ENCODE measurements at regions of chr17 and their contacts with region 1.

Region 1: DNA sequence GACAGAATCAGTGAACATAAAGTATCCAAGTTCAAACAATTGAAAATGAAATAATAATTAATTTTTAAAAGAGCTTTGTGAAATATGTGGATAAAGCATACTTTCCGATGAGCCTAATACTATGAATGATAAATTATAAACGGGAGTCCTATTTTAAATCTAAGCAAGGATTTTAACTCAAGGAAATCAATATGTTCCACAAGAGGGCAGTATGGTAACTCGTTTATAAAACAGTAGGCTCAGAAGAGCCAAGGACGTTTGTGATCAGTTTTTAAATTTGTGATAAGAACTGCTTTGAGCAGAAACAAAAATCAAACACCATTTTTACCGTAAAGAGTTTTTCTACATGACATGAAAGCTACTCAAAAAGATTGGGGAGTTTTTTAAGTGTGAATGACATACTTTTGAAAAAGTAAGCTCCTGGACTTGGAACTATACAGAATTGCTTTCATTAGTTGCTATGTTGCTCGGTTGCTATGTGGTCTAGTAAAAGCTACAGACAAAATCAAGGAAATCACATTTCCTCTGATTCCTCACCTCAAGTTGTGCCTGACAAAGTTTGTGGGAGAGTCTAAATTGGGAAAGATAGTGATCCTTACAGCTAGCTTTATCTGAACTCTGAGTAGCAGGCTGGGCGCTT is 11.8 kb upstream of the TEKT1 start:
- DNase-seq: no peak
- H3K4me3 ChIP-seq: no peak overlapping the region
- CTCF ChIP-seq: peak; percentile 26

Region 2: DNA sequence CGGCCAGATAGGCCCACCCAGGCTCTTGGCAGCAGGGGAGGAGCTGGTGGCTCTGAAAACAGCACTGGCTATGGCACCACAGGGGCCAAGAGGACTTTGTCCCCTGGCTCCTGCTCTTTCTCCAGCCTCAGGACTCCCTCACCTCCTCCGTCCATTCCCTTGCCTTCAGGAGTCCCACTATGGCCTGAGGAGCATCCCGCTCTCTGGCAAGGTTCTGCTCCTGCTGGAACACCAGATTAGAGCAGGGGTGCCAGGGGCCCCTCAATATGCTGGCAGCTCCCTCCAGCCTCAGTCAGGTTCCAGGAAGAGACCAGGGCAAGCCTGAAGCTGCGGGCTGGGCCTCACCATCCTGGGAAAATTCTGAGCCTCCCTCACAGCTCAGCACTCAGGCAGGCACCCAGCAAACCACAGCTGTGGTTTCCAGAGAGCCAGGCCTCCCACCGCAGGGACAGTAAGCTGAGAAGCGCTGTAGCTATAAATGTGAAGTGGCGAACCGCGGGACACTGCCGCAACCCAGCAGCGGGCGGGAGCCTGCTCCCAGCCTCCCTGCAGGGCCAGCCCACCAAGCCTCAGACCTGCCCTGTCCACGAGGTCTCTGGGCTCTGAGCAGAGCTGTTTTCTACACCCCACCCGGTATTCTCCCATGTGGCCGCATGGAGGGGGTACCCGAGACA is 166.1 kb before region 1 on chr17:
- CTCF ChIA-PET with region 1: interaction called, 14 read pairs
- POLR2A ChIA-PET with region 1: no interaction called
- DNase-seq: peak; percentile 10
- H3K4me3 ChIP-seq: no peak overlapping the region
- CTCF ChIP-seq: no peak

Region 3: GRCh38 chr17:6831661-6832263 is 11.6 kb before region 1 on chr17 and contains the start of gene TEKT1:
- CTCF ChIA-PET with region 1: interaction called, 27 read pairs
- POLR2A ChIA-PET with region 1: no interaction called
- DNase-seq: no peak
- H3K4me3 ChIP-seq: peak within 1 kb of the TSS; percentile 12; the same call in 1 of the 2 replicates
- CTCF ChIP-seq: no peak

Region 4: DNA sequence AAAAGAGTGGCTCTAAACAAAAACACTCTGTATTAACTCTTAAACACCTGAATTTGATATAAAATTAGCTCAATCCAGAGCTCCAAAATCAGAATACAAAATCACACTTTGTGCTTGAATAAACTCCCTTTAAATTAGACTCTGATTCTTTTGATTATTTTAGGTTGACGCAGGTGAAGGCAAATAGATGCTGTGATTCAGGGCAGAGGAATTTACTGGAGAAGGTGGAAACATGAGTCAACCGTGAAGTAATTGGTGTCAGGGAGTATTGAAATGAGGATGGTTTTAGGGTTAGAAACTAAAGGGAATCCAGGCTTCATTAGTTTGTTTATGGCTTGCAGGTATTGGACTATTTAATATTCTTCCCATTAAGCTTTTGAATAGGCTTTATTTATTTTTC is 25.2 kb after region 1 on chr17:
- CTCF ChIA-PET with region 1: interaction called, 13 read pairs
- POLR2A ChIA-PET with region 1: no interaction called
- DNase-seq: no peak
- H3K4me3 ChIP-seq: no peak overlapping the region
- CTCF ChIP-seq: no peak

Region 5: GRCh38 chr17:7021993-7022778 is 178.8 kb after region 1 on chr17:
- CTCF ChIA-PET with region 1: interaction called, 23 read pairs
- POLR2A ChIA-PET with region 1: no interaction called
- DNase-seq: no peak
- H3K4me3 ChIP-seq: peak overlapping the region; percentile 44
- CTCF ChIP-seq: peak; percentile 98